GM13977 (cell line): ENCODE measurements at regions of chr14 and their contacts with region 1.

Region 1: DNA sequence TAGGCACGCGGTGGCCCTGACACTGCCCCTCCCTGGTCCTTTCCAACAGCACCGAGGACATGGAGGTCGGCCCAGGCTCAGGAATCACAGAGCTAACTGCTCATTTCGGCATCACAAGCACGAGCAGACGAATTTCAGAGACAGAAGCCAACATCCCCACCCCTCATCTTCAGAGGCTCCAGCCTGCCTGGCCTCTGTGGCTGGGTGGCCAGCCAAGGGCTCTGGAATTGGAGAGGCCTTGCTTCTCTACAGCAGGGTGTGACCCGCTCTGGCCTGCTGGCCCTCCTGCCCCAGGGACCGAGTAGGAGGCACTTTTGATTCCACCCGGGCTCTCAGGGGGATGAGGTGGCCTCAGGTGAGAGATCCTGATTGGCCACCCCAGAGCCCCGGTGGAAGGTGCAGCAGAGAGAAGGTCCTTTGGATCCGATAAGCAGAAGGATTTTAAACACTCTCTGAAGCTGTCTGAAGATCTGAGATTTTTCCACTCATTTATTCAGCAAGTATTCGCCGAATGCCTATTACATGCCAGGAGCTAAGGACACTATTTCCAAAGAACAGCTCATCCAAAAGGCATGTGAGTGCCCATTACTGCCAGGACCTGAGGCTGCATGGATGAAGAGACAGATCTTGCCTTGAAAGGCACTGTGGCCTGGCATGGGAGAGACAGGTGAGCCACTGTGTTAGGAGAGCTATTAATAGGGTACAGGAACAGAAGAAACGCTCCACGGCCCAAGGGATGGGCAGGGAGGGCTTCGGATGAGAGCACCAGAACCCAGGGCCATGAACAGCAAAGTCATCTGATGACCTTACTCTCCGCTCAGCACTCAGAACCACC is 10.2 kb downstream of the BAG5 start:
- DNase-seq: no peak
- CTCF ChIP-seq: no peak

Region 2: GRCh38 chr14:103243764-103244737 is 308.2 kb before region 1 on chr14:
- in situ Hi-C with region 1: no loop called
- DNase-seq: no peak
- CTCF ChIP-seq: no peak

Region 3: DNA sequence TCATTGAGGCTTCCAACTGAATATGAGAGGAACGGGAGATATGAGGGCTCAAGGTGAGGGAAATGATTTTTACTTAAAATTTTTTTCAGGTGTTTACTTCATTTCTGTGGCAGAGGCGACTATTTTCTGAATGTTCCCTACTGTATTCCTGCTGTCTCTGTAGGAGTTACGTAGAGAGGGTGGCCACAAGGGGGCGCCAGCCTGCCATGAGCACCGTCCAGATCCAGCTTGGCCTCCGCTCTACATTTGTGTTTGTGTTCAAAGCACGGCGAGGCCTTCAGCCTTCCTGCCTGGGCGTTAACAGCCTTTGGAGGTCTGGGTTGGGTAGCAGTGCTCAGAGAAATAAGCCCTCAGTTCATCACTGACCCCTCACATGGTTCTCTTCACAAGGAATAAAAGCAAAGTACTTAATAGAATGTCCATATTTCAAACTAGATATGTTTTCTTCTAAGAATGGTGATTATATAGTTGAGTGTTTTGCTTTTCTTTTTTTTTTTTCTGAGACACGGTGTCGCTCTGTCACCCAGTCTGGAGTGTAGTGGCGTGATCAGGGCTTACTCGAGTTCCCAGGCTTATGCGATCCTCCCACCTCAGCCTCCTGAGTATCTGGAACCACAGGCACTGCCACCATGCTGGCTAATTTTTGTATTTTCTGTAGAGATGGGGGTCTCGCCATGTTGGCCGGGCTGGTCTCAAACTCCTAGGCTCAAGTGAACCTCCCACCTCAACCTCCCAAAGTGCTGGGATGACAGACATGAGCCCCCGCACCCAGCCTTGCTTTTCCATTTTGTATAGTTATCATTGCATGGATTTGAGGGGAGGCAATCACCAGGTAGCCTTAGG is 51.9 kb before region 1 on chr14:
- in situ Hi-C with region 1: loop called (anchors 10 kb)
- DNase-seq: peak; percentile 71
- CTCF ChIP-seq: peak; percentile 91

Region 4: GRCh38 chr14:103715052-103716000 is 163.1 kb after region 1 on chr14 and contains the starts of genes XRCC3 and ZFYVE21:
- in situ Hi-C with region 1: no loop called
- DNase-seq: peak; percentile 100
- CTCF ChIP-seq: no peak